Tibial artery (tissue), 4 donors: ENCODE measurements at regions of chr20 and their contacts with region 1.

Region 1: GRCh38 chr20:47146703-47147102 is 209.8 kb downstream of the ZMYND8 start:
- DNase-seq: no peak
- H3K4me3 ChIP-seq: no peak overlapping the region
- H3K27ac ChIP-seq: no peak overlapping the region
- H3K4me1 ChIP-seq: no peaks in the 10 kb centered on the region
- H3K27me3 ChIP-seq: peaks cover 0 to 3% of the 10 kb centered on the region in 2 donors
- CTCF ChIP-seq: no peak

Region 2: GRCh38 chr20:46767127-46767761 is 379.5 kb before region 1 on chr20:
- intact Hi-C with region 1: loop called (anchors 10 kb)
- DNase-seq: no peak
- H3K4me3 ChIP-seq: no peak overlapping the region
- H3K27ac ChIP-seq: no peak overlapping the region
- H3K4me1 ChIP-seq: no peaks in the 10 kb centered on the region
- H3K27me3 ChIP-seq: peaks cover 0 to 34% of the 10 kb centered on the region in 2 donors
- CTCF ChIP-seq: peak; percentile 18 to 25

Region 3: GRCh38 chr20:47334022-47334551 is 187.4 kb after region 1 on chr20:
- intact Hi-C with region 1: no loop called
- DNase-seq: no peak
- H3K4me3 ChIP-seq: peak overlapping the region in 1 of 2 donors; percentile 9
- H3K27ac ChIP-seq: peak overlapping the region; percentile 80 to 82
- H3K4me1 ChIP-seq: peaks cover 8 to 77% (median 41%) of the 10 kb centered on the region in 4 donors
- H3K27me3 ChIP-seq: no peaks in the 10 kb centered on the region
- CTCF ChIP-seq: no peak